IMR-90 (cell line): ENCODE measurements at regions of chr17 and their contacts with region 1.

Region 1: GRCh38 chr17:55437159-55437605 is 15.5 kb upstream of the MMD start:
- DNase-seq: no peak
- ATAC-seq: no peak
- H3K4me3 ChIP-seq: no peak overlapping the region
- H3K27ac ChIP-seq: no peak overlapping the region
- H3K4me1 ChIP-seq: peaks cover 20% of the 10 kb centered on the region
- H3K27me3 ChIP-seq: no peaks in the 10 kb centered on the region
- CTCF ChIP-seq: no peak
- POLR2A ChIP-seq: no peak
- RAD21 ChIP-seq: no peak

Region 2: DNA sequence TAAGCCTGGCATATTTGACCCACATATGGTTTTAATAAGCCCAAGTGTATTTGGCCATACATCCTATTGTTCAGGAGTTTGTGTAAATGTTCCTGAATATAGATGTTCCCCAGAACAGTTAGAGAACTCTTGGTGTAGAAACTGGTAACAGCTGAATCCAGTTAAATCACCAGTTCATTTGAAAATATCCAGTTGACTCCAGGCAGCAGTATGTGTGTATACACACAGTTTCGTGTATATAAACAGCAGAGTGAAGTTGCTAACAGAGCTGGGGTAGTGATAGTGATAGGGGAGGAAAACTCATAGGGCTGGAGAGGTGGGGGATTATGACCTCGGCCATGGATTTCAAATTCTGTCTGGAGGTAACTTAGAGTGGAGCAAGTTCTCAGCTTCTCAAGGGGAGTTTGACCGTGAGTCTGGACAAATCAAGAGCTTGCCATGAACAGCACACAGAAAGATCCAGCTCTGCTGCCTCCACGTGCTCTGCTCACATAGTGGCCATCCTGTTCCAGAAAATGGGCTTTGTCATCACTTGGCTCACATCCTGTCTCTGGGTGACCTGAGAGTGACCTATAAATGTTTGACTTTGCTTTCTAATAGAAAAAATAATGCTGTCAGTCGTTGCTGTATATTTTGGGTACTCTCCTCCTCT is 15.1 kb after region 1 on chr17:
- CTCF ChIA-PET with region 1: interaction called, 4 read pairs
- POLR2A ChIA-PET with region 1: interaction called, 3 read pairs
- dilution Hi-C with region 1: no loop called
- in situ Hi-C with region 1: no loop called
- intact Hi-C with region 1: loop called (anchors 1 kb)
- DNase-seq: peak; percentile 81
- ATAC-seq: peak; percentile 50
- H3K4me3 ChIP-seq: no peak overlapping the region
- H3K27ac ChIP-seq: peak overlapping the region; percentile 97
- H3K4me1 ChIP-seq: peaks cover 27% of the 10 kb centered on the region
- H3K27me3 ChIP-seq: no peaks in the 10 kb centered on the region
- CTCF ChIP-seq: no peak
- POLR2A ChIP-seq: no peak
- RAD21 ChIP-seq: no peak

Region 3: GRCh38 chr17:55487695-55488429 is 50.7 kb after region 1 on chr17:
- CTCF ChIA-PET with region 1: no interaction called
- POLR2A ChIA-PET with region 1: no interaction called
- dilution Hi-C with region 1: no loop called
- in situ Hi-C with region 1: no loop called
- intact Hi-C with region 1: loop called (anchors 1 kb)
- DNase-seq: no peak
- ATAC-seq: peak; percentile 57
- H3K4me3 ChIP-seq: no peak overlapping the region
- H3K27ac ChIP-seq: no peak overlapping the region
- H3K4me1 ChIP-seq: no peaks in the 10 kb centered on the region; the same call in 1 of the 2 replicates
- H3K27me3 ChIP-seq: no peaks in the 10 kb centered on the region; the same call in none of the 2 replicates
- CTCF ChIP-seq: no peak
- POLR2A ChIP-seq: no peak
- RAD21 ChIP-seq: no peak